ENCODE measurements at regions of chr14 and their contacts with region 1.

Region 1: GRCh38 chr14:63641473-63642228 is at the start of gene WDR89:
- DNase-seq: peak; percentile 99 to 100 (median 100)
- H3K4me3 ChIP-seq: peak within 1 kb of the TSS; percentile 59 to 96 (median 84)
- H3K27ac ChIP-seq: peak within 1 kb of the TSS; percentile 89 to 95
- H3K4me1 ChIP-seq: peaks cover 3 to 23% (median 14%) of the 10 kb centered on the region in 4 experiments
- H3K27me3 ChIP-seq: no peaks in the 10 kb centered on the region

Region 2: DNA sequence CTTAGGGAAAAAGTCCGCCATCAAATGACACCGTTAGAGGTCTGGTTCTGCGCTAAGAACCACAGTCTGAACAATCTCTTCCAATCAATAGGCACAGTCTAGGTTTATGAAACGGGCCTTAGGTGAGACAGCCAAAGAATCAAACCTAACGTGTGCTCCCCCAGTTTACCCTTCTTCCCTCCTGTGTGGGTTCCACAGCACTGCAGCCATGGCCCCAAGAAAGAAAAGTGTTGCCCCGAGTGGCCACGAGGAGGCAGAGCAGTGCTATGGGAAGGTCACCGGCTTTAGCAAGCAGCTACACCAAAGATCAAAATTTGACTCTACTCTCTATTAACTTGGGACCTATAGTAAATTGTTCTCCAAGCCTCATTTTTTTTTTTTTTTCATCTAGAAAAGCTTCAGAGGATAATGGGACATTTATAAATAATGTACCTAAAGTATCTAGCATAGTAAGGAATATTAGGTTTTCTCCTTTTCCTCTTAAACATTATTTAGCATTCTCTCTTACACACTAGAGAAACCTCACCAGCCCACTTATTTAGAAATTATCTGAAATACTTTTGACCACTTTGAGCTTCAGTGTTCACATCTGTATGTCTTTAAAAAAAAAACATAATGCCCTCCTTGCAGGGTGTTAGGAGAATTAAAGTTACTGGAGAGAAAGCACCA is 252.8 kb before region 1 on chr14:
- CTCF ChIA-PET with region 1: interaction called, 11 read pairs
- POLR2A ChIA-PET with region 1: no interaction called
- DNase-seq: peak; percentile 52 to 73 (median 68)
- H3K4me3 ChIP-seq: no peak overlapping the region
- H3K27ac ChIP-seq: no peak overlapping the region
- H3K4me1 ChIP-seq: peaks cover 0 to 4% (median 3%) of the 10 kb centered on the region in 4 experiments
- H3K27me3 ChIP-seq: no peaks in the 10 kb centered on the region

Region 3: DNA sequence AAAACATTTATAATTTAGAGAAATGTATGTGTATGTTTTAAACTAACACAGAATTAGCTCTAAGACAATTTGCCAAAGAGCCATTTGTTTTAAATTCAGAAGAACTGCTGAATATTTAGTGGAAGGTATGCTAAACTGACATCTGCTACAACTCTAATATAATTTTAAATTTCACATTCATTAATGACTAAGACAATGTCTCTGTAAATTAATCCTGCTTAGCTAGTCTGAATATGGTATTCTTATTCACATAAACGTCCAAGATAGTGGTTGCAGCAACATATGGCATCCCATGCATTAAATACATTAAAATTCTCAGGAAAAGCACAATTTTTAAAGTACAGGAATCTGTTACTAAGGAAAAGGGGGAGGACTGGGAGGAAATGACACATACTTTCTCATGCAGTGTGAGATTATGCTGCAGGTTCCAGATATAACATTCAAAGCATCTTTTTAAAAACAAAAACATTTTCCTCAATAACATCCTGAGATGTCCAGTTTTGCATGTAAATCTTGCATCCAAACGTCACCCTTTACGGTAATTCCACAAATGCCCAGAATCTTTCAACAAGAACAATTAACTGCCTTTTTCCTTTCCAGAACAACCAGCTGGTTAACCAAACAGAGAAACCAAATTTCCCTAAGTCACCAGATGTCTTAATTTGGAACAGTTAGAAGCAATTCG is 26.8 kb before region 1 on chr14:
- CTCF ChIA-PET with region 1: no interaction called
- POLR2A ChIA-PET with region 1: no interaction called
- DNase-seq: no peak
- H3K4me3 ChIP-seq: peak overlapping the region in 1 of 7 experiments; percentile 33
- H3K27ac ChIP-seq: peak overlapping the region in 1 of 2 experiments; percentile 6
- H3K4me1 ChIP-seq: peaks cover 3 to 20% (median 9%) of the 10 kb centered on the region in 4 experiments
- H3K27me3 ChIP-seq: no peaks in the 10 kb centered on the region

Region 4: GRCh38 chr14:63727774-63728728 is 86.4 kb after region 1 on chr14 and contains the start of gene SGPP1:
- CTCF ChIA-PET with region 1: interaction called, 10 read pairs
- POLR2A ChIA-PET with region 1: interaction called, 5 read pairs
- DNase-seq: peak; percentile 87 to 92 (median 90)
- H3K4me3 ChIP-seq: peak within 1 kb of the TSS; percentile 83 to 98 (median 93)
- H3K27ac ChIP-seq: peak within 1 kb of the TSS in 1 of 2 experiments; percentile 66
- H3K4me1 ChIP-seq: peaks cover 13 to 24% (median 17%) of the 10 kb centered on the region in 4 experiments
- H3K27me3 ChIP-seq: no peaks in the 10 kb centered on the region

Measured in common myeloid progenitor, CD34-positive (primary cell).